ENCODE measurements at regions of chr5 and their contacts with region 1.

Region 1: GRCh38 chr5:133938929-133939328 is 29.5 kb downstream of the C5orf15 start:
- DNase-seq: no peak
- ATAC-seq: no peak
- H3K4me3 ChIP-seq: no peak overlapping the region
- H3K27ac ChIP-seq: peak overlapping the region; percentile 68
- H3K4me1 ChIP-seq: peaks cover 37 to 66% of the 10 kb centered on the region in 2 experiments
- H3K27me3 ChIP-seq: no peaks in the 10 kb centered on the region
- CTCF ChIP-seq: no peak
- EP300 ChIP-seq: no peak
- POLR2A ChIP-seq: no peak
- RAD21 ChIP-seq: no peak

Region 2: GRCh38 chr5:133727636-133728035 is 211.3 kb before region 1 on chr5:
- CTCF ChIA-PET with region 1: no interaction called
- POLR2A ChIA-PET with region 1: no interaction called
- in situ Hi-C with region 1: no loop called
- intact Hi-C with region 1: no loop called
- DNase-seq: no peak
- ATAC-seq: no peak
- H3K4me3 ChIP-seq: no peak overlapping the region
- H3K27ac ChIP-seq: no peak overlapping the region
- H3K4me1 ChIP-seq: no peaks in the 10 kb centered on the region
- H3K27me3 ChIP-seq: peaks cover 0 to 5% of the 10 kb centered on the region in 2 experiments; a peak in 1 of 5 replicates
- CTCF ChIP-seq: no peak
- EP300 ChIP-seq: no peak
- POLR2A ChIP-seq: no peak
- RAD21 ChIP-seq: no peak

Region 3: DNA sequence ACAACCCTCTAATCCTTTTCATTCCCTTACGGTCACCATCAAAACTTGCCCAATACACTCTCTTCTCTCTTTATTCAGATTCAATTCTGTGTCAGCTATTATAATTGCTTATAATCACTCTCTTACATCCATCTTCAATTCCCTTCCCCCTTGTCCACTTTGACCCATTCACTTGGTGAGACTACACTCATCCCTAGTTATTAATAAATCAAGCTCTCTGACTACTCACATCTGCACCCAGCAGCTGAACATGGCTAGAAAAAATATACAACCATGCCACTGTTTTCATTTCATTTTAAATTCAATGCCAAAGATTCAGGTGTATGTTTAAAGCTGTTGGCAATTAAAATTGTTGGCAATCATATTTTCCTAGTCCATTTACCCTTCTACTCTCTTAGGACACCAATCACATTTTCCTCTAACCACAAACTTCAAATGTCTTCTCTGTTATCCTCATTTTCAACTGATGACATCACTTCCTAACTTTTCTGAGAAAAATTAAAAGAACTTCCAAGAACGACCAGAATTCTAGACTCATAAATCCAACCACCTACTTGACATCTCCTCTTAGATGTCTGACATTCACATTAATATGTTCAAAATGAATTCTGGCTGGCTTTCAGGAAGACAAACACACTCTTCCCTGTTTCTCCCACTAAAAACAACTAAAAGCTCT is 24.0 kb after region 1 on chr5:
- CTCF ChIA-PET with region 1: no interaction called
- POLR2A ChIA-PET with region 1: interaction called, 13 read pairs
- in situ Hi-C with region 1: no loop called
- intact Hi-C with region 1: no loop called
- DNase-seq: peak in 2 of 4 experiments; percentile 43 to 66
- ATAC-seq: peak; percentile 51
- H3K4me3 ChIP-seq: no peak overlapping the region
- H3K27ac ChIP-seq: peak overlapping the region; percentile 66; the same call in 2 of the 3 replicates
- H3K4me1 ChIP-seq: peaks cover 0 to 17% of the 10 kb centered on the region in 2 experiments; a peak in 3 of 5 replicates
- H3K27me3 ChIP-seq: no peaks in the 10 kb centered on the region
- CTCF ChIP-seq: no peak
- EP300 ChIP-seq: peak; percentile 62
- POLR2A ChIP-seq: no peak
- RAD21 ChIP-seq: no peak

Measured in K562 (cell line).